Heart right ventricle (tissue), 16 donors: ENCODE measurements at regions of chr10 and their contacts with region 1.

Region 1: DNA sequence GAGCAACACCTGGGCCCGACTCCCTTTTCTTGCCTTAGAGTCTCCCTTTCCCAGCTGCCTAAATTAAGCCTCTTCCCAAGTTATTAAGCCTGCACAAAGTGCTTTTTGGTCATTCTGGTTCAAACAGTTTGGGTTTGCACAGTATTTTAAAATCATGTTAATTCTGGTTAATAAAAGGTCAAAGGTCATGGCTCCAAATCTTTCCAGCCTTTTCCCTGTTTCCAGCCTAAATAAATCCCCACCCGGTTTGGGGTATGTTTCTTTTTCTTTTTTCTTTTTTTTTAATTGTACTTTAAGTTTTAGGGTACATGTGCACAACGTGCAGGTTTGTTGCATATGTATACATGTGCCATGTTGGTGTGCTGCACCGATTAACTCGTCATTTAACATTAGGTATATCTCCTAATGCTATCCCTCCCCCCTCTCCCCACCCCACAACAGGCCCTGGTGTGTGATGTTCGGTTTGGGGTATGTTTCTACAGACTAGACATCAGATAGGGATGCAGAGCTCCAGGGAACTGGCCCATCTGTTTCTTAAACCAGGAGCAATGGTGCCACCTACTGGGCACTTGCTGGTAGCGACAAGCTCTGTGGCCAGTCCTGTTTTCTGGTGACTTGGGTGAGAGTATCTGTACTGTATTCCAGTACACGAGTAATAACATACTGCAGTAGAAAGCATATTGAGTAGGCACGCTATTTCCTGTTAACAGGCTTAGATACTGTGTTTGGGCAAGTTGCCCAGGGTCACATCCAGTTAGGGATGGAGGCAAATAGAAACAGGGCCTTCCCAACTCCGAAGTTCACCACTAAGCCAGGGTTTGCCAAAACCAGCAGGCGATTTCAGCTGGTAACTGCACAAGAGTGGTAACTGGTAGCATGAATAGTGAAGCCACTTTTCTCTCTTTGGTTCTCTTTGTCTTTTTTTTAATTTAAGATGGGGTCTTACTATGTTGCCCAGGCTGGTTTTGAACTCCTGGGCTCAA is 60.6 kb upstream of the TRIM8 start:
- DNase-seq: peak; percentile 79 to 86
- ATAC-seq: peak; percentile 86 to 94 (median 91)
- H3K4me3 ChIP-seq: no peak overlapping the region
- H3K27ac ChIP-seq: no peak overlapping the region
- H3K4me1 ChIP-seq: peaks cover 0 to 42% (median 23%) of the 10 kb centered on the region in 9 donors
- H3K27me3 ChIP-seq: no peaks in the 10 kb centered on the region
- CTCF ChIP-seq: peak; percentile 70 to 92 (median 85)

Region 2: DNA sequence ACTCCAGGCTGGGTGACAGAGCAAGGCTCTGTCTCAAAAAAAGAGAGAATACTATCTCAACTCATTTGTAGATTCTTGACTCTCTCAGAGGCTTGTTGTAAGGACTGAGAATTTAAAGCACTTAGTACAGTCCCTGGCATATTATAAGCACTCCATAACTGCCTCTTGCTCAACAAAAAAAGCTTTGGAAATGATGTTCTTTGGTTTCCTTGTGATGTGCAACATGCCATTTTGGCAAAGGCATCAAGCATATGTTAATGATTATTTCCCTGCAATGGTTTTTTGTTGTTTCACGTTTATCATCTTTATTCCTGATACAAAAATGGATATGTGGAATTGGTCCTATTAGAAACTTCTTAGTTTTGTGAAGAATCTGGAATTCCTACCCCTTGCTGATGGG is 415.9 kb before region 1 on chr10:
- intact Hi-C with region 1: loop called in 1 of 10 experiments (anchors 10 kb)
- DNase-seq: no peak
- ATAC-seq: no peak
- H3K4me3 ChIP-seq: no peak overlapping the region
- H3K27ac ChIP-seq: no peak overlapping the region
- H3K4me1 ChIP-seq: peaks cover 0 to 12% (median 4%) of the 10 kb centered on the region in 9 donors
- H3K27me3 ChIP-seq: no peaks in the 10 kb centered on the region
- CTCF ChIP-seq: no peak

Region 3: GRCh38 chr10:102384053-102384452 is 199.7 kb before region 1 on chr10:
- intact Hi-C with region 1: loop called in 1 of 10 experiments (anchors 10 kb)
- DNase-seq: no peak
- ATAC-seq: peak in 1 of 8 donors; percentile 47
- H3K4me3 ChIP-seq: no peak overlapping the region
- H3K27ac ChIP-seq: no peak overlapping the region
- H3K4me1 ChIP-seq: peaks cover 0 to 14% (median 0%) of the 10 kb centered on the region in 9 donors
- H3K27me3 ChIP-seq: no peaks in the 10 kb centered on the region
- CTCF ChIP-seq: peak in 2 of 9 donors; percentile 15 to 16

Region 4: GRCh38 chr10:102420810-102421644 is 162.7 kb before region 1 on chr10 and contains the start of gene FBXL15:
- intact Hi-C with region 1: loop called in 1 of 10 experiments (anchors 10 kb)
- DNase-seq: peak; percentile 94 to 97
- ATAC-seq: peak; percentile 87 to 96 (median 92)
- H3K4me3 ChIP-seq: peak within 1 kb of the TSS; percentile 80 to 100 (median 94)
- H3K27ac ChIP-seq: peak within 1 kb of the TSS; percentile 70 to 97 (median 91)
- H3K4me1 ChIP-seq: peaks cover 15 to 40% (median 36%) of the 10 kb centered on the region in 9 donors
- H3K27me3 ChIP-seq: peaks cover 0 to 32% (median 30%) of the 10 kb centered on the region in 7 donors
- CTCF ChIP-seq: peak in 1 of 9 donors; percentile 3
- total RNA-seq, gene FBXL15: 6.7 to 10.5 (median 9.9) TPM

Region 5: DNA sequence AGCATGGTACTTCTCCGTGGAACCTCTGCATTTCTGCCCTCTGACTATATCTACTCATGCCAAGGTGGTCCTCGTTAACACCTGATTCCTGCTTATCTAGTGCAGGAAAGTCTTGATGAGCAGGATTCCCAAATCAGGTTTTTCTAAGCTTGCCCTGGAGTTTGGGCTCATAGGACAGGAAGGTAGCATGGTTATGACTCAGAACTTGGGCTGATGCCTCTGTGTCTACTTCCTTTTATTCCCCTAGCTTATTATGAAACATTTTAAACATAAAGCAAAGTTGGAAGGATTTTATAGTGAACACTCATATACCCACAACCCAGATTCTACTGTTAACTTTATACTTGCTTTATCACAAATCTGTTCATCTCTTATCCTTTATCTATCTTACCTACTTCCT is 74.3 kb before region 1 on chr10:
- intact Hi-C with region 1: loop called in 8 of 10 experiments (anchors 2 to 5 kb)
- DNase-seq: no peak
- ATAC-seq: no peak
- H3K4me3 ChIP-seq: no peak overlapping the region
- H3K27ac ChIP-seq: peak overlapping the region in 1 of 10 donors; percentile 16
- H3K4me1 ChIP-seq: peaks cover 0 to 64% (median 23%) of the 10 kb centered on the region in 9 donors
- H3K27me3 ChIP-seq: no peaks in the 10 kb centered on the region
- CTCF ChIP-seq: no peak